ENCODE measurements at regions of chr18 and their contacts with region 1.

Region 1: GRCh38 chr18:70491734-70492348 is 203.0 kb downstream of the SOCS6 start:
- DNase-seq: peak; percentile 80
- ATAC-seq: peak; percentile 85
- H3K4me3 ChIP-seq: no peak overlapping the region
- H3K27ac ChIP-seq: no peak overlapping the region
- H3K4me1 ChIP-seq: no peaks in the 10 kb centered on the region
- H3K27me3 ChIP-seq: peaks cover 9% of the 10 kb centered on the region
- CTCF ChIP-seq: peak; percentile 92

Region 2: DNA sequence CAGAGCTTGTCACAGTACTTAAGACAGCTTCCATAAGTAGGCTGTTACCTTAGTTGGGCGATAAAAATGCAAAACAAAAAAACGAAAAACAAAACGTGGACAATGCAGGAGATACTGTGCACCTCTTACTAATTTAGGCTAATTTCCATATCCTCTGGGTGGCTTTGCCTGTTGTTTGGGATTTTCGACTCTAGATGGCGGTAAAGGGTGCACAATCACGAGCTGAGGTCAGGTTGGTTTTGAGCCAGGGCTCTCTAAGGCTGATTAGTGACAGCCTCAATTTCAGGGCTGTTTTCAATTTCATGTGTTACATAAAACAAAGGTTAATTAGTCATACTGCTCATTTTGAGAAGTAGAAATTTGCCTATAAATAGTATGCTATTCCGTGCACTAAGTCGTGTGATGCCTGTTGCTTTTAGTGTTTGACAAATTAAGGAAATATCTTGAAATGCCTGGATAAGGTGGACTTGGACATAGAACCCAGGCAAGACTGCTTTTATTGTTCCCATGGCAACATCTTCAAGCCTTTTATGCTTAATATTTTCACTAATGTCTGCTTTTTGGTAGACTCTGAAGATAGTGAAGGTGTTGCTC is 290.1 kb after region 1 on chr18:
- CTCF ChIA-PET with region 1: no interaction called
- POLR2A ChIA-PET with region 1: no interaction called
- intact Hi-C with region 1: loop called (anchors 5 kb)
- DNase-seq: peak; percentile 72
- ATAC-seq: peak; percentile 76
- H3K4me3 ChIP-seq: no peak overlapping the region
- H3K27ac ChIP-seq: no peak overlapping the region
- H3K4me1 ChIP-seq: no peaks in the 10 kb centered on the region
- H3K27me3 ChIP-seq: peaks cover 18% of the 10 kb centered on the region
- CTCF ChIP-seq: peak; percentile 81

Region 3: GRCh38 chr18:70931942-70932814 is 440.3 kb after region 1 on chr18:
- CTCF ChIA-PET with region 1: no interaction called
- POLR2A ChIA-PET with region 1: no interaction called
- intact Hi-C with region 1: loop called (anchors 2 kb)
- DNase-seq: peak; percentile 49
- ATAC-seq: peak; percentile 54
- H3K4me3 ChIP-seq: no peak overlapping the region
- H3K27ac ChIP-seq: no peak overlapping the region
- H3K4me1 ChIP-seq: no peaks in the 10 kb centered on the region
- H3K27me3 ChIP-seq: no peaks in the 10 kb centered on the region
- CTCF ChIP-seq: peak; percentile 79

Measured in PC-3 (cell line).